ENCODE measurements at regions of chr20 and their contacts with region 1.

Region 1: DNA sequence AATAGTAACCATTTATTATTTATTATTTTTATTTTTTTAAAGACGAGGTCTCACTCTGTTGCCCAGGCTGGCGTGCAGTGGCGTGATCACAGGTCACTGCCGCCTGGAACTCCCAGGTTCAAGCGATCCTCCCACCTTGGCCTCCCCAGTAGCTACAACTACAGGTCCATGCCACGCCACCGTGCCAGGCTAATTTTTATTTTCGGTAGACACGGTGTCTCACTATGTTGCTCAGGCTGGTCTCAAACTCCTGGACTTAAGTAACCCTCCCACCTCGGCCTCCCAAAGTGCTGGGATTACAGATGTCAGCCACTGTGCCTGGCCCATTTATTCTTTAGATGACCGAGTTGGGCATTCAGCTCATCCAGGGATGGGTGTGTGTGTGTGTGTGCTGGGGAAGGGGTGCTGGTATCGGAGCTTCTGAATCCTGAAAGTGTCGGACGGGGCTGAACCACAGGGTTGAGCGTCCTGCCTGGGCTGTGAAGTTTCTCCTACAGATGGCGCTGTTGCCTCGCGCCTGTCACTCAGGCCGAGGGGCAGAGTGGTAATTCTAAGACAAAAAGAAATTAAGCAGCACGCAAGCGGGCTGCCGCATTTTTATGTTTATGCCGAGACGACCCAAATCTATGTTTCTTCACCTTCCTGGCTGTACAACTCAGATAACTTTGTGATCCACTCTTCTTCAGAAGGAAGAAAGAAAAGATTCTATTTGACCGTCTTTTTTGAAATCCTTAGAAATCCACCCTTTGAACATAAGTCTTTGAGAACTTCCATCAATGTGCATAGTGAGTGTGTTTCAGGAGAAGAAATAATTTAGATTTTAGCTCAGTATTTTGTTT is 252.8 kb downstream of the CDH26 start:
- DNase-seq: peak; percentile 55
- ATAC-seq: peak; percentile 88 to 90

Region 2: DNA sequence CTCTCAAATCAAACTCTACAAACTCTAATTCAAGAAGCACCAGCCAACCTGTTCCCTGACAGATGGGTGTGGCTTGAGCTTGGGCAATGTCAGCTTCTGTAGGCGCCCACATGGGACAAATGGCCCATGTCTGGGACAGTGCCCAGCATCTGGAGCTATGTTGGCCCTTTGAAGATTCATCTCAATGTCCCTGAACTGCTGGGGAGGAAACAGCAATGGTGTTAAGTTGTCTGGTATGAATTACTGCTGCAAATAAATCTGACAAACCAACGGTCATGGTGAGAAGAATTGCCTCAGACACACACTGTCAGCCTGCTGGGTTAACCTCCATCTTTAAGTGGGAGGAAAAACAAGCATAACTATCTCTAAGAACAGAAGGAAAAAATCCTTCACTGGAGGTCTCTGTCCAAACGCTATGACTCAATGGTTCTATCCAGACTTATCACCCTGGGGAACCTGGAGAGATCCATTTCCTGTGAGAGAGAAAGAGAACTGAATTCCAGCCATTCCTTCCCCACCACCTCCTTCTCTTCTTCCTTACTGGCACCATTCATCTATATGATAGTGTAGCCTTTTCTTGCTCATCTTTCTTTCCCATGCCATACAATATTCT is 22.1 kb after region 1 on chr20:
- intact Hi-C with region 1: no loop called
- DNase-seq: no peak
- ATAC-seq: no peak

Region 3: DNA sequence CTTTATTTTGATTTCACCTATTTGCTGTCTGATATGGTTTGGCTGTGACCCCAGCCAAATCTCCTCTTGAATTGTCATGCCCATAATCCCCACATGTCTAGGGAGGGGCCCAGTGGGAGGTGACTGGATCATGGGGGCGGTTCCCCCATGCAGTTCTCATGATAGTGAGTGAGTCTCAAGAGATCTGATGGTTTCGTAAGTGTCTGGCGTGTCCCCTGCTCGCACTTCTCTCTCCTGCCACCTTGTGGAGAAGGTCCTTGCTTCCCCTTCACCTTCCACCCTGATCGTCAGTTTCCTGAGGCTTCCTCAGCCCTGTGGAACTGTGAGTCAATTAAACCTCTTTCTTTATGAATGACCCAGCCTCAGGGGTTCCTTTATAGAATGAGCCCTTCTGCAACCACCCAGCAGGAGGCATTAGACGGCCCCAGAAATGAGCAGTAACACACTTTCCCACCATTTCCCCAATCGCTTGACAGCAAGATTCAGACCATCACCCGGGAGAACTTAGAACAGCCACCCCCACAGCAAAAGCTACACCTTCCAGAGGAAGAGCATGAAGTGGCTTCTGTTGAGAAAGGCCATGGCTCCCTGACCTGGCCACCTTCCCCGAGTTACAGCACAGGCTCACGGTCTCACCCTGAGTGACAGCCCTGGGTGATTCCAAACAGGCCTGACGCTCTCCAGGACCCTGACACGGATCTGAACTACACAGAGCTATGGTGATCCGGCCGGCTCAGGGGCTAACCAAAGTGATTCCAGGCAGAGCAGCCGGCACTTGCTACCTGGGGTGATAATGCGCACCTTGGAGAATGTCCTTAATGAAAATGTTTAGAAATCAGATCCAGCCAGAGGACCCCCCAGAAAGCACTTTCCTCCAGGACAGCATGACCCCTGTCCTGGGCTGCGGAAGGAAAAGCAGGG is 909.9 kb after region 1 on chr20:
- intact Hi-C with region 1: loop called (anchors 5 kb)
- DNase-seq: no peak
- ATAC-seq: peak; percentile 71 to 74

Region 4: GRCh38 chr20:61896058-61896961 is 1685.3 kb after region 1 on chr20:
- intact Hi-C with region 1: loop called in 1 of 2 experiments (anchors 2 kb)
- DNase-seq: peak; percentile 53
- ATAC-seq: peak; percentile 22 to 71